ENCODE measurements at regions of chr14 and their contacts with region 1.

Region 1: GRCh38 chr14:100234511-100234910 is 4.4 kb upstream of the YY1 start:
- DNase-seq: no peak
- ATAC-seq: no peak
- H3K4me3 ChIP-seq: no peak overlapping the region
- H3K4me3 Mint-ChIP-seq: no peak overlapping the region
- H3K27ac ChIP-seq: no peak overlapping the region
- H3K27ac Mint-ChIP-seq: no peak overlapping the region
- H3K4me1 ChIP-seq: peaks cover 14 to 15% of the 10 kb centered on the region in 2 donors
- H3K4me1 Mint-ChIP-seq: peaks cover 34% of the 10 kb centered on the region
- H3K27me3 ChIP-seq: no peaks in the 10 kb centered on the region
- H3K27me3 Mint-ChIP-seq: no peaks in the 10 kb centered on the region
- CTCF ChIP-seq: no peak

Region 2: GRCh38 chr14:100221533-100222223 is 12.8 kb before region 1 on chr14:
- CTCF ChIA-PET with region 1: interaction called, 31 read pairs
- POLR2A ChIA-PET with region 1: interaction called, 8 read pairs
- intact Hi-C with region 1: loop called (anchors 1 kb)
- DNase-seq: peak; percentile 73
- ATAC-seq: peak; percentile 98
- H3K4me3 ChIP-seq: peak overlapping the region; percentile 64 to 92 (median 78)
- H3K4me3 Mint-ChIP-seq: no peak overlapping the region
- H3K27ac ChIP-seq: peak overlapping the region; percentile 59 to 65
- H3K27ac Mint-ChIP-seq: no peak overlapping the region
- H3K4me1 ChIP-seq: peaks cover 28 to 38% of the 10 kb centered on the region in 2 donors
- H3K4me1 Mint-ChIP-seq: peaks cover 19% of the 10 kb centered on the region
- H3K27me3 ChIP-seq: no peaks in the 10 kb centered on the region
- H3K27me3 Mint-ChIP-seq: no peaks in the 10 kb centered on the region
- CTCF ChIP-seq: no peak

Region 3: DNA sequence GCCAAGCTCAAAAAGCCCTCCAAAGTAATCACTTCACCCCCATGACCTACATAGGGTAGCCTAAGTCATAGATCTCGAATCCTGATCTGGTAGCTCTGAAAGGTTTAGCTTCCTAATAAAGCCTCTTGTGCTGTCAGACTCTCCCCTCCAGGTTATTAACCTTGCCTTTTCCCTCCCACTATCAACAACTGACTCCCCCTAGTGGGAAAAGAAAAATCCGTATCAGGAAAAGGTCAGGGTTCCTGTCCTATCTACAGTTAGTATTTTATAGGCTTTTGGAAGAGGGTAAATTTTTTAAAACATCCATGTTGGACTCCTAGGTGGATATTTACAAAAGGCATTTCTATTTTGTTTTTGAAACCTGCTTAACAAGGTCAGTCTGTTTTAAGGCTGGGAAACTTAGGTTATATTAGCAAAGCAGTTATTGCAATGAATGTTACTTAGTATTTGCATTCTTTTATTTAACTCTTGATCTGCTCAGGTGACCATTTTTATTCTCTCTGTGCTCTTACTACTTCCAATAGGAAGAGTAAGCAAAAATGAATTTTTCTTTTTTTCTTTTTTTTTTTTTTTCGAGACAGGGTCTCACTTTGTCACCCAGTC is 12.4 kb after region 1 on chr14:
- CTCF ChIA-PET with region 1: no interaction called
- POLR2A ChIA-PET with region 1: no interaction called
- intact Hi-C with region 1: no loop called
- DNase-seq: peak; percentile 55
- ATAC-seq: peak; percentile 48
- H3K4me3 ChIP-seq: no peak overlapping the region
- H3K4me3 Mint-ChIP-seq: peak overlapping the region; percentile 39
- H3K27ac ChIP-seq: peak overlapping the region; percentile 10 to 52
- H3K27ac Mint-ChIP-seq: peak overlapping the region; percentile 84
- H3K4me1 ChIP-seq: peaks cover 48 to 60% of the 10 kb centered on the region in 2 donors
- H3K4me1 Mint-ChIP-seq: peaks cover 68% of the 10 kb centered on the region
- H3K27me3 ChIP-seq: no peaks in the 10 kb centered on the region
- H3K27me3 Mint-ChIP-seq: no peaks in the 10 kb centered on the region
- CTCF ChIP-seq: no peak